ENCODE measurements at regions of chr14 and their contacts with region 1.

Region 1: DNA sequence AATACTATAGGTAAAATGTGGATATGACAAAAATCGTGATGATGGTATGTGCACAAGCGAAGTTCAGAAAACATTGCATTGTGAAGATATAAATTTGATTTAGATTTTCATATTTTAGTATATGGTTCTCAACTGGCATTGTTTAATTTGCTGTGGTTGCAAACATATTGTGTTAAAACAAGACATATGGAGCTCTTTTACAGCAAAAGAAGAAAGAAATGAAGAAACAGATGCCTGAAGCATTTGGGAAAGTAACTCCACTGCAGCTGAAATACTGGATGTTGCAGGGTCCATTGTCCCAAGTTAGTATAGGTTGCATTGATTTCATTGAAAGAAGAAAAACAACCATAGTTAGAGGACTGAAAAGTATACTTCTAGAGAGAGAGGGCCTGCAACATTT is 185.8 kb upstream of the SSTR1 start:
- DNase-seq: no peak

Region 2: DNA sequence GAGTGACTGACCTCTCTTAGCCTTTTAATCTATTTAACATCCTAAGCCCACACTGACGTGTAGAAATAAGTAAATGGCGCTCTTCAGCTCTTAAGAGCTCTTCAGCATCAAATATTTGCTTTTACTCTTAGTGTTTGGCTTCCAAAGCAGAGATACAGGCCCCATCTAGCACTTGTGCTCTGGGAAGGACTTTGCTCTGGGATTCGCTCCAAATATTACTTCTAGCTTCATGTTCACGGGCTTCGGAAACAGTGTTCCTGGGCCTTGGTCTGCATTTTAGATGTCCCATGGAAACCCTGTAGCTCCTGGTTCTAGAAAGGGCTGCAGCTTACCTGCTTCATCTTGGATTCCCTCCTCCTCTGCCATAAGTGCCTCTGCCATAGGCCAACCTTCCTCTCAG is 1436.8 kb before region 1 on chr14:
- intact Hi-C with region 1: no loop called
- DNase-seq: no peak

Region 3: GRCh38 chr14:37843954-37844607 is 177.8 kb before region 1 on chr14:
- intact Hi-C with region 1: no loop called
- DNase-seq: no peak

Region 4: GRCh38 chr14:37988472-37988871 is 33.4 kb before region 1 on chr14:
- intact Hi-C with region 1: no loop called
- DNase-seq: no peak

Region 5: DNA sequence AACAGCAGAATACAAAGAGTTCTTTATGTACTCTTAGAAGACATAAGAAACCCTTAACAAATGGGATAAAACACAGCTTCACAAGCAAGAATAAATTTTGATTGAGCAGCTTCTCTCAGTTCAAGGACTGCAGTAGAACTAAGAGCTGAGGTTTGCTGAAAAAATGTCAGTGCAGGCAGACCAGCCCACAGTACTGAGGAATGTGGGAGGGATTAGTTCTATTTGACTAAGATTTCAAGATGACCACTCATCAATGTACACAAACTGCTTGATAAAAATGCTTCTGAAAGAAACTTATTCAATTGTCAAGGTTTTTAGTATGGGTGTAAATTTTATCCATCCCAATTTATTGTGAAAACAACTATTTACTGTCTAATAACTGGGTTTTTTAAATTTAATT is 942.8 kb after region 1 on chr14:
- intact Hi-C with region 1: loop called in 1 of 2 experiments (anchors 5 kb)
- DNase-seq: no peak

Measured in posterior vena cava (tissue), 2 donors.